ENCODE measurements at regions of chr15 and their contacts with region 1.

Region 1: DNA sequence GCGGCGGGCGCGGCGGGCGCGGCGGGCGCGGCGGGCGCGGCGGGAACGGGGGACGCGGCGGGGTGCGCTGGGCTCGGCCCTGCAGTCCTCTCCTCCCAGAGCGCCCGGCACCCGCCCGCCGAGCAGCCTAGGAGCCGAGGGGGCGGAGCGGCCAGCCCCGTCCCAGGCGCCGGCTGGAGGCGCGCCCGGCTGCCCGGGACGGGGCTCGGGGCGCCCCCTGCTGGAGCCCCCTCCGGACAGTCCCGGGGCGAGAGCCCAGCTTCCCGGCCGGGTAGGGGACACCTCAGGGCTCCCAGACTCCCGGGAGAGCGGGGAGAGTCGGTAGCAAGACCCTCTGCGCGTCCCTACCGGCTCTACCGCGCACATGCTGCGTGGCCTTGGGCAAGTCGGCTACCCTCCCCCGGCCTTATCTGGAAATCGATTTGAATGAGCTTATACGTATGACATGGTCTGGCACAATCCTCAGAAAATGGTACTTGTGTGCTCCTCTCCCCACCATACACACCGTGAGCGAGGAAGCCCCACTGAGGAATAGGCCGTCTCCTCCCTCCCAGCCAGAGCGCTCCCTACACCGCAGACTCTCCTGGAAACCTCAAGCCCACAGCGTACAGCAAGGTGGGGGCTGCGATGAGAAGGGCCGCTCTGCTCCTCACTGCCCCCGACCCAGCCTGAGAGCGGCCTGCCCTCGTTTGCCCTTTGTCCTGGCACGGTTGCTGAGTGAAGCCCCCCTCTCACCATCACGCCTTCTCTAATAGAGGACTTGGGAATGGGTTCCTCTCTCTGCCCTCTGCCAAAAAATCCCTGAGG is at the start of gene DAPK2:
- DNase-seq: no peak
- H3K4me3 ChIP-seq: peak within 1 kb of the TSS; percentile 65 to 70
- H3K27ac ChIP-seq: peak within 1 kb of the TSS; percentile 75
- H3K4me1 ChIP-seq: peaks cover 41% of the 10 kb centered on the region
- H3K27me3 ChIP-seq: no peaks in the 10 kb centered on the region
- CTCF ChIP-seq: peak; percentile 72 to 94 (median 80)
- POLR2A ChIP-seq: no peak
- total RNA-seq, gene DAPK2: 50.3 TPM

Region 2: DNA sequence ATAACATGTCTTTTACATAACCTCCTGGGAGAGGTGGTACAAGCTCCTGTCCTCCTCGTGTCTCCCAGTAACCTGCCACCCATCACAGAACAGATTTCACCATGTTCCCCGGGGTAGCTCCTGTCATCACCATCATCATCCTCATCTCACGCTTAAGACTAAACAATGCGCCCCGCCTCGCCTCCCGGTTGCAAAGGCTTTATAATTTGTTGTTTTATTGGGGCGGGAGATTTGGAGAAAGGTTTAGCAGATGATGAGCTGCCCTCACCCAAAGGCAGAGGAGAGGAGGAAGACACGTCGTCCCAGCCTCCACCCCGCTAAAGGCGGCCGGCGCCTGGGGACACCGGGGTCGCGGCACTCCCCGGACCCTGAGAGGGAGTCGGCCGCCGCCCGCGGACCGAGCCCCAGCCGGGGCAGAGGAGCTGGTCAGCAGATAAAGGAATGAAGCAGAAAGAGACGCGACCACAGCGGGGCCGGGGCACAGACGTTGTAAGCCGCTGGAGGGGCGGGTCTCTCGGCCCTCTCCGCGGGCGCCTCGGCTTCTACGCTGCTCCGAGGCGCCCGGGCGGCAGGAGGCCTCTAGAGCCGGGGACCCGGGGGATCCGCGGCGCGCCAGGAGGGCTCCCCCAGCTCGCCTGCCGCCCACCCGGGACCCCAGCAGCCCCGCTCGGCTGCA is 213.4 kb before region 1 on chr15:
- intact Hi-C with region 1: no loop called
- DNase-seq: no peak
- H3K4me3 ChIP-seq: peak overlapping the region; percentile 64 to 85
- H3K27ac ChIP-seq: peak overlapping the region; percentile 96
- H3K4me1 ChIP-seq: peaks cover 50% of the 10 kb centered on the region
- H3K27me3 ChIP-seq: no peaks in the 10 kb centered on the region
- CTCF ChIP-seq: no peak
- POLR2A ChIP-seq: no peak

Region 3: GRCh38 chr15:63909819-63910437 is 136.6 kb before region 1 on chr15:
- intact Hi-C with region 1: loop called (anchors 10 kb)
- DNase-seq: no peak
- H3K4me3 ChIP-seq: no peak overlapping the region
- H3K27ac ChIP-seq: peak overlapping the region; percentile 58
- H3K4me1 ChIP-seq: peaks cover 32% of the 10 kb centered on the region
- H3K27me3 ChIP-seq: no peaks in the 10 kb centered on the region
- CTCF ChIP-seq: no peak
- POLR2A ChIP-seq: no peak